B cell (primary cell): ENCODE measurements at regions of chr10 and their contacts with region 1.

Region 1: GRCh38 chr10:27223964-27224363 is 16.6 kb downstream of the ACBD5 start:
- DNase-seq: peak; percentile 67
- ATAC-seq: no peak
- H3K4me3 ChIP-seq: no peak overlapping the region
- H3K4me3 Mint-ChIP-seq: no peak overlapping the region
- H3K27ac ChIP-seq: no peak overlapping the region
- H3K27ac Mint-ChIP-seq: no peak overlapping the region
- H3K4me1 ChIP-seq: no peaks in the 10 kb centered on the region
- H3K4me1 Mint-ChIP-seq: no peaks in the 10 kb centered on the region
- H3K27me3 ChIP-seq: no peaks in the 10 kb centered on the region
- H3K27me3 Mint-ChIP-seq: no peaks in the 10 kb centered on the region
- CTCF ChIP-seq: peak; percentile 88

Region 2: GRCh38 chr10:26516540-26517101 is 707.3 kb before region 1 on chr10:
- CTCF ChIA-PET with region 1: no interaction called
- POLR2A ChIA-PET with region 1: no interaction called
- intact Hi-C with region 1: no loop called
- DNase-seq: no peak
- ATAC-seq: no peak
- H3K4me3 ChIP-seq: no peak overlapping the region
- H3K4me3 Mint-ChIP-seq: no peak overlapping the region
- H3K27ac ChIP-seq: peak overlapping the region in 1 of 2 donors; percentile 44
- H3K27ac Mint-ChIP-seq: no peak overlapping the region
- H3K4me1 ChIP-seq: peaks cover 0 to 10% of the 10 kb centered on the region in 2 donors
- H3K4me1 Mint-ChIP-seq: peaks cover 14% of the 10 kb centered on the region
- H3K27me3 ChIP-seq: no peaks in the 10 kb centered on the region
- H3K27me3 Mint-ChIP-seq: no peaks in the 10 kb centered on the region
- CTCF ChIP-seq: no peak

Region 3: GRCh38 chr10:26939290-26939961 is 284.5 kb before region 1 on chr10:
- CTCF ChIA-PET with region 1: no interaction called
- POLR2A ChIA-PET with region 1: no interaction called
- intact Hi-C with region 1: no loop called
- DNase-seq: no peak
- ATAC-seq: no peak
- H3K4me3 ChIP-seq: no peak overlapping the region
- H3K4me3 Mint-ChIP-seq: no peak overlapping the region
- H3K27ac ChIP-seq: no peak overlapping the region
- H3K27ac Mint-ChIP-seq: no peak overlapping the region
- H3K4me1 ChIP-seq: no peaks in the 10 kb centered on the region
- H3K4me1 Mint-ChIP-seq: no peaks in the 10 kb centered on the region
- H3K27me3 ChIP-seq: no peaks in the 10 kb centered on the region
- H3K27me3 Mint-ChIP-seq: no peaks in the 10 kb centered on the region
- CTCF ChIP-seq: no peak

Region 4: GRCh38 chr10:27207350-27207749 is 16.6 kb before region 1 on chr10:
- CTCF ChIA-PET with region 1: interaction called, 12 read pairs
- POLR2A ChIA-PET with region 1: interaction called, 3 read pairs
- intact Hi-C with region 1: no loop called
- DNase-seq: no peak
- ATAC-seq: no peak
- H3K4me3 ChIP-seq: no peak overlapping the region
- H3K4me3 Mint-ChIP-seq: no peak overlapping the region
- H3K27ac ChIP-seq: no peak overlapping the region
- H3K27ac Mint-ChIP-seq: no peak overlapping the region
- H3K4me1 ChIP-seq: no peaks in the 10 kb centered on the region
- H3K4me1 Mint-ChIP-seq: no peaks in the 10 kb centered on the region
- H3K27me3 ChIP-seq: no peaks in the 10 kb centered on the region
- H3K27me3 Mint-ChIP-seq: no peaks in the 10 kb centered on the region
- CTCF ChIP-seq: no peak

Region 5: GRCh38 chr10:27235706-27236105 is 11.7 kb after region 1 on chr10:
- CTCF ChIA-PET with region 1: interaction called, 18 read pairs
- POLR2A ChIA-PET with region 1: interaction called, 3 read pairs
- intact Hi-C with region 1: loop called (anchors 2 kb)
- DNase-seq: no peak
- ATAC-seq: no peak
- H3K4me3 ChIP-seq: no peak overlapping the region
- H3K4me3 Mint-ChIP-seq: no peak overlapping the region
- H3K27ac ChIP-seq: no peak overlapping the region
- H3K27ac Mint-ChIP-seq: no peak overlapping the region
- H3K4me1 ChIP-seq: peaks cover 5 to 12% of the 10 kb centered on the region in 2 donors
- H3K4me1 Mint-ChIP-seq: peaks cover 17% of the 10 kb centered on the region
- H3K27me3 ChIP-seq: no peaks in the 10 kb centered on the region
- H3K27me3 Mint-ChIP-seq: no peaks in the 10 kb centered on the region
- CTCF ChIP-seq: no peak

Region 6: DNA sequence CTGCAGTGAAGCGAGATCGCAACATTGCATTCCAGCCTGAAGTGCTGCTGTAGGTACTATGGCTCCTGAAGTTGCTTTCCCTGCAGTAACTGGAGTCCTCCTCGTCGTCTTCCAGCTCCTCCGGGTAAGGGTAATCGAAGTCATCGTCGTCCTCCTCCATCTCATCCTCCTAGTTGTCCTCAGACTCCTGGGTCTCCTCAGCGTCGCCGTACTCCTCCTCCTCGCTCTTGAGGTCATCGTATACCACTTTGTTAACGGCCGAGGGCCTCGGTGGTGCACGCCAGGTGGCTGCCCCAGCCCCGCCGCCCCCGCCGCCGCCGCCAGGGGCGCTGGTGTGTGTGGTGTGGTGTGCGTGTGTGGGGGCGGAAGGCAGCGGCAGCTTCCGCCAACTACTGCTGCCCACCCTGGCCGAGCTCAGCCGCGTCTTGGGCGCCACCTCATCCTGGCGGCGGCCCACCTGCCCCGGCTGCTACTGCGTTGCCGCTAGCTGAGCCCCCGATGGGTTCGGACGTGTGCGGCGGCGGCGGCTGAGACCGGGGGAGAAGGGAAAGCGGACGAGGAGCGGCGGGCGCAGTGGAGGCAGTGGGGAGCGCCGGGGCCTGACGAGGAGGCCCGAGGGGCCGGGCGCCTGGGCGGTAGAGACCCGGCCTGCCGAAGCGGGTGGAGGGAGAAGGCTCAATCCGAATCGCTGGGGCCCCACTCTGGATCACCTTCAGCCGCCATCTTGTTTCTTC is 28.5 kb after region 1 on chr10:
- CTCF ChIA-PET with region 1: interaction called, 14 read pairs
- POLR2A ChIA-PET with region 1: interaction called, 8 read pairs
- intact Hi-C with region 1: no loop called
- DNase-seq: peak; percentile 82
- ATAC-seq: peak; percentile 99
- H3K4me3 ChIP-seq: peak overlapping the region in 4 of 5 experiments; percentile 64 to 79 (median 71)
- H3K4me3 Mint-ChIP-seq: peak overlapping the region; percentile 85
- H3K27ac ChIP-seq: peak overlapping the region; percentile 78 to 91
- H3K27ac Mint-ChIP-seq: peak overlapping the region; percentile 92
- H3K4me1 ChIP-seq: peaks cover 1 to 9% of the 10 kb centered on the region in 2 donors
- H3K4me1 Mint-ChIP-seq: peaks cover 7% of the 10 kb centered on the region
- H3K27me3 ChIP-seq: peaks cover 0 to 6% (median 2%) of the 10 kb centered on the region in 4 experiments
- H3K27me3 Mint-ChIP-seq: peaks cover 6% of the 10 kb centered on the region
- CTCF ChIP-seq: peak; percentile 90

Region 7: DNA sequence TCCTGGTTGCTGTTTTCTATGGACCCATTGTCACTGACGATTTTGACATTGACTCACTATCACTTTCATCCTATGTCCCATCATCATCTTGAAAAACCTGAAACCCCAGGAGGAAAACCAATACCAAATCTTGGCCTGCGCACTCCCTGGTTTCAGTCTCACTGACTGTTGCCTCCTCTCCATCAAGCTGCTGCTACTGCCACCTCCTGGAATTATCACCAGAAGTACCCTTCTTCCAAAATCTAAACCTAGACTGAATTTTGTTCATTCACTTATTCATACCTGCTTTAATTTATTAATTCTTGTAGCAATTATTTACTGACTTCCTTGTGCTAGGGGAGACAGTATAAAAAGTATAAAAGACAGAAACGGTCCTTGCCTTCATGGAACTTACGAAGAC is 61.1 kb after region 1 on chr10:
- CTCF ChIA-PET with region 1: interaction called, 20 read pairs
- POLR2A ChIA-PET with region 1: no interaction called
- intact Hi-C with region 1: loop called (anchors 1 kb)
- DNase-seq: peak; percentile 8
- ATAC-seq: no peak
- H3K4me3 ChIP-seq: no peak overlapping the region
- H3K4me3 Mint-ChIP-seq: no peak overlapping the region
- H3K27ac ChIP-seq: no peak overlapping the region
- H3K27ac Mint-ChIP-seq: no peak overlapping the region
- H3K4me1 ChIP-seq: no peaks in the 10 kb centered on the region
- H3K4me1 Mint-ChIP-seq: no peaks in the 10 kb centered on the region
- H3K27me3 ChIP-seq: no peaks in the 10 kb centered on the region
- H3K27me3 Mint-ChIP-seq: peaks cover 4% of the 10 kb centered on the region
- CTCF ChIP-seq: no peak

Region 8: GRCh38 chr10:27360581-27361172 is 136.7 kb after region 1 on chr10:
- CTCF ChIA-PET with region 1: interaction called, 52 read pairs
- POLR2A ChIA-PET with region 1: interaction called, 5 read pairs
- intact Hi-C with region 1: loop called (anchors 1 kb)
- DNase-seq: peak; percentile 86
- ATAC-seq: peak; percentile 92
- H3K4me3 ChIP-seq: no peak overlapping the region
- H3K4me3 Mint-ChIP-seq: no peak overlapping the region
- H3K27ac ChIP-seq: no peak overlapping the region
- H3K27ac Mint-ChIP-seq: no peak overlapping the region
- H3K4me1 ChIP-seq: peaks cover 7 to 9% of the 10 kb centered on the region in 2 donors
- H3K4me1 Mint-ChIP-seq: peaks cover 10% of the 10 kb centered on the region
- H3K27me3 ChIP-seq: no peaks in the 10 kb centered on the region
- H3K27me3 Mint-ChIP-seq: no peaks in the 10 kb centered on the region
- CTCF ChIP-seq: peak; percentile 99

Region 9: GRCh38 chr10:27426948-27427467 is 203.0 kb after region 1 on chr10:
- CTCF ChIA-PET with region 1: no interaction called
- POLR2A ChIA-PET with region 1: no interaction called
- intact Hi-C with region 1: no loop called
- DNase-seq: no peak
- ATAC-seq: no peak
- H3K4me3 ChIP-seq: no peak overlapping the region
- H3K4me3 Mint-ChIP-seq: no peak overlapping the region
- H3K27ac ChIP-seq: no peak overlapping the region
- H3K27ac Mint-ChIP-seq: no peak overlapping the region
- H3K4me1 ChIP-seq: no peaks in the 10 kb centered on the region
- H3K4me1 Mint-ChIP-seq: no peaks in the 10 kb centered on the region
- H3K27me3 ChIP-seq: no peaks in the 10 kb centered on the region
- H3K27me3 Mint-ChIP-seq: peaks cover 19% of the 10 kb centered on the region
- CTCF ChIP-seq: no peak

Region 10: DNA sequence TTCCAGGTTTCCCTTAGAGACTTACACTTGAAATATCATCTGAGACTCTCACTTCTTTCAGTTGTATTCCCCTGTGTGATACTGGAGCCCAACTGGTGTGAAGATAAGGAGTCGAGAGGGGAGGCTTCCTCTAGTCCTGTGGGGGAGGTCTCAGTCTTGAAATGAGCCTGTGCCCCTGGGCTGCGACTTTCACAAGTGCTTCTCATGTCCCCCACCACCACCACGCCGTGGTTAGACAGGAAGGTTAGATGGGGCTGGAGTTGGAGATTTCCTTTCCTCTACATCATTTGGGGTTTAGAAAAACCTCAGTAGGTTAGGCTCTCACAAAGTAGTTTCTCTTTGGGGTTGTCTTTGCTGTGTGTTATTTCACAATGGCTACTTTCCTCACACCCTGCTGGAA is 547.3 kb after region 1 on chr10:
- CTCF ChIA-PET with region 1: no interaction called
- POLR2A ChIA-PET with region 1: no interaction called
- intact Hi-C with region 1: no loop called
- DNase-seq: no peak
- ATAC-seq: no peak
- H3K4me3 ChIP-seq: no peak overlapping the region
- H3K4me3 Mint-ChIP-seq: no peak overlapping the region
- H3K27ac ChIP-seq: no peak overlapping the region
- H3K27ac Mint-ChIP-seq: no peak overlapping the region
- H3K4me1 ChIP-seq: no peaks in the 10 kb centered on the region
- H3K4me1 Mint-ChIP-seq: no peaks in the 10 kb centered on the region
- H3K27me3 ChIP-seq: peaks cover 0 to 12% (median 0%) of the 10 kb centered on the region in 4 experiments
- H3K27me3 Mint-ChIP-seq: peaks cover 43% of the 10 kb centered on the region
- CTCF ChIP-seq: no peak